PC-9 (cell line): ENCODE measurements at regions of chr3 and their contacts with region 1.

Region 1: GRCh38 chr3:141231101-141231935 is at the start of gene PXYLP1:
- DNase-seq: peak; percentile 71 to 98
- H3K4me3 ChIP-seq: peak within 1 kb of the TSS; percentile 88
- H3K27ac ChIP-seq: peak within 1 kb of the TSS; percentile 58
- H3K4me1 ChIP-seq: peaks cover 13% of the 10 kb centered on the region
- H3K27me3 ChIP-seq: no peaks in the 10 kb centered on the region
- CTCF ChIP-seq: peak; percentile 51; the same call in 1 of the 2 replicates
- total RNA-seq, gene PXYLP1: 7.8 and 11.1 TPM in 2 replicates

Region 2: DNA sequence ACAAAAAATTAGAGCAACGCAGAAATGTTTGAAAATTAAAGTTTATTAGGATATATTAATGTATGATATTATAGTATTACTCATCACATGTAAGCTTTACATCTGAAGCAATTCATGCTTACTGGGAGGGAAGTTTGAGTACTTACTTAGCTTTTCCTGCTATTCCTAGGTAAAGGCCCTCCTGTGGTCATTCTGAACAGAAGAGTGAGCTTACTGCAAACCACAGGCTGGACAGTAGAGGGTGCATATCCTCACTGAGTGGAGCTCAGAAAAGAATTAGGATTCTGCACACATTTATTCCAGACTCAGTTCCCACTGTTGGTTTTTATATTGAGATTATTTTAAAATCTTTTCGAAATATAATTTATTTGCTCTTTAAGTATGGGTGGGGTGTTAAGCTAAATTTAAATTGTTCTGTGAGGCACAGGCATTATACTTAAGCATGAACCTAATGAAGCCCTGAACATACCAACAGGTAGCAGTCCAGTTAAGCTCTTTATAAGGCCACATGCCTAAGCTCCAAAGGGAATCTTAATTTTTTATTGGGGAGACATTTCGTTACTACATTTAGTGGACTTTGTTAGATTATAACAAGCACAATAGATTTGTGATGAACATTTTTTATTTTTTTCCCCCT is 1877.3 kb before region 1 on chr3:
- CTCF ChIA-PET with region 1: interaction called, 10 read pairs
- POLR2A ChIA-PET with region 1: no interaction called
- intact Hi-C with region 1: no loop called
- DNase-seq: peak; percentile 25 to 42
- H3K4me3 ChIP-seq: no peak overlapping the region
- H3K27ac ChIP-seq: no peak overlapping the region
- H3K4me1 ChIP-seq: no peaks in the 10 kb centered on the region
- H3K27me3 ChIP-seq: no peaks in the 10 kb centered on the region
- CTCF ChIP-seq: peak; percentile 74

Region 3: DNA sequence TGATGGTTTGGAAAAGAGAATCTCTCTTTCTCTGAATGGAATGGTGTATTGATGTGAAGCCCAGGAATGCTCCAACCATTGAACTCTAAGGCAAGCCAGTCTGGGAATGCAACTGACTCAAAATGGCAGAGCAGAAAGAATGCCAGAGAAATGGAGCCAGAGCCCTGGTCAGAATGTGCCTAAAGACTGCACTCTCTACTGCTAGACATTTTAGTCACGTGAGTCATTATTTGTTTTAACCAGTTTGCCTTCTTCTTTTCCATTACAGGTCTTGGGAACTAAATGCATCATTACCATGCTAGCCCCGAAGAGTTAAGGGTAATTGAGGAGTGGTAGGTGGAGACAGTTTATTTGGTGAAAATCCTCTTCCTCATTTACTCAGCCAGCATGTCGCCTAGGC is 620.8 kb before region 1 on chr3:
- CTCF ChIA-PET with region 1: interaction called, 21 read pairs
- POLR2A ChIA-PET with region 1: no interaction called
- intact Hi-C with region 1: no loop called
- DNase-seq: no peak
- H3K4me3 ChIP-seq: no peak overlapping the region
- H3K27ac ChIP-seq: no peak overlapping the region
- H3K4me1 ChIP-seq: no peaks in the 10 kb centered on the region
- H3K27me3 ChIP-seq: no peaks in the 10 kb centered on the region
- CTCF ChIP-seq: no peak

Region 4: DNA sequence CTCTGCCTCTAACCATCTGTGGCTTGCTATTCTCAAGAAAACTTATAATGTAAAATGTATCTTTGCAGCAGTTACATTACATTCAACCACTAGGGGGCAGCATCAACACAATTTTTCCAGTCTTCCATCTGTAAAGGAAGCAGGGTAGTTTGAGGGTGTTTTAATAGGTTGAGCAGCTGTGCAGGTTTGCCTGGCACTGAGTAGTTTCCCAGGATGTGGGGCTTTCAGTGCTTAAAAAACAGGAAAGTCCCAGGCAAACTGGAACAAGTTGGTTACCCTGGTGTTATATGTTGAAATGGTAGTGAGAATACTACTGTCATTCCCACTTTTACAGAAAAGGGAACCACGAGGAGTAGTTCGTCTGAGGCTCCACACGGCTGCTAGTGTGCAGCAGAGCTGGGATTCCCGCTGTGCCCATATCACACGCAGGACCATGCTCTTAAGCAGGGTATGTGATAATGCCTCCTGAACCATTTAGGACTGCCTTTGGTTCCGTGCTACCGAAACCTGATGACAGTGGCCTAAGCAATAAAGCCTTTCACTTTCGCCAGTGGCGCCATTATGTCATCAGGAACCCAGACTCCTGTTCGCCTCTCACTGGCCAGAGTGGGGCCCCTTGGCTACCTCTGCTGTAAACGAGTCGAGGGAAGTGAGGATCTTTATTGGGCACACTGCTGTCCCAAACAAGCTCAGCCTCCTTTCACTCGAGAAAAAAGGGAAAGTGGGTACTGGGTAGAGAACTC is 72.3 kb after region 1 on chr3:
- CTCF ChIA-PET with region 1: interaction called, 23 read pairs
- POLR2A ChIA-PET with region 1: no interaction called
- intact Hi-C with region 1: loop called (anchors 2 kb)
- DNase-seq: peak; percentile 56
- H3K4me3 ChIP-seq: no peak overlapping the region
- H3K27ac ChIP-seq: no peak overlapping the region
- H3K4me1 ChIP-seq: peaks cover 11% of the 10 kb centered on the region
- H3K27me3 ChIP-seq: no peaks in the 10 kb centered on the region
- CTCF ChIP-seq: peak; percentile 93

Region 5: GRCh38 chr3:141368062-141368924 is 137.0 kb after region 1 on chr3 and contains the start of gene ZBTB38:
- CTCF ChIA-PET with region 1: no interaction called
- POLR2A ChIA-PET with region 1: no interaction called
- intact Hi-C with region 1: loop called (anchors 5 kb)
- DNase-seq: peak; percentile 88 to 96
- H3K4me3 ChIP-seq: no peak within 1 kb of the TSS; the same call in 1 of the 2 replicates
- H3K27ac ChIP-seq: peak within 1 kb of the TSS; percentile 63
- H3K4me1 ChIP-seq: peaks cover 38% of the 10 kb centered on the region
- H3K27me3 ChIP-seq: no peaks in the 10 kb centered on the region
- CTCF ChIP-seq: no peak
- total RNA-seq, gene ZBTB38: 18.5 and 21.8 TPM in 2 replicates

Region 6: DNA sequence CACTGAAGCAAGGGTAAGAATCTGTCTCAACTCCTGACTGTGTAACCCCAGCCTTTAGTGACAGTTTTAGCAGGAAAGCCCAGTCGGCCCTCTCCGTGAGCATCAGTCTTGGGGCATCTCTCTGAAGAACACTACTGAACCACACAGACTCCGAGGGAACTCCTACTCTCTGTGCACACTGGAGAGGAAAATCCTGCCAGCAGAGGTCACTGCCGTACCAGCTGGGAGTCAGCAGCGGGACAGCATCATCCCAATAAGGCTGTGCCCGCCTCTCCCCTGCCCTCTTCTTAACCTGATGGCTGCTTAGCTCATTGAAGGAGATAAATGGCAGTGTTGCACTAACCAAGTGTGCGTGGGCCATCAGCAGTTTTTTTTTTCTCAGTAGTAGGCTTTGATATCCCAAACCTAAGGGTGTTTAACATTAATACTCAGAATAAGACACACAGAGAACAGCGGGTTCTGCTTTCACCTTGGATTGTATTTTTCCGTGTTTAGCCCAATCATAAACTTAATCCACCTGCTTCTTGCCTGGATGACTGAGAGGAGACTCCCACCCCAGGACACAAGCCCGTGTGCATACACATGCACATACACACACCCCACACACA is 228.9 kb after region 1 on chr3:
- CTCF ChIA-PET with region 1: no interaction called
- POLR2A ChIA-PET with region 1: no interaction called
- intact Hi-C with region 1: no loop called
- DNase-seq: peak; percentile 57 to 86
- H3K4me3 ChIP-seq: no peak overlapping the region
- H3K27ac ChIP-seq: no peak overlapping the region
- H3K4me1 ChIP-seq: peaks cover 13% of the 10 kb centered on the region
- H3K27me3 ChIP-seq: no peaks in the 10 kb centered on the region
- CTCF ChIP-seq: peak; percentile 83